Prostate gland (tissue), 2 donors: ENCODE measurements at regions of chr11 and their contacts with region 1.

Region 1: GRCh38 chr11:130636722-130637517 is 188.5 kb downstream of the ADAMTS15 start:
- DNase-seq: no peak
- H3K4me3 ChIP-seq: no peak overlapping the region
- H3K27ac ChIP-seq: no peak overlapping the region
- H3K4me1 ChIP-seq: no peaks in the 10 kb centered on the region
- H3K27me3 ChIP-seq: no peaks in the 10 kb centered on the region
- CTCF ChIP-seq: no peak
- POLR2A ChIP-seq: no peak

Region 2: DNA sequence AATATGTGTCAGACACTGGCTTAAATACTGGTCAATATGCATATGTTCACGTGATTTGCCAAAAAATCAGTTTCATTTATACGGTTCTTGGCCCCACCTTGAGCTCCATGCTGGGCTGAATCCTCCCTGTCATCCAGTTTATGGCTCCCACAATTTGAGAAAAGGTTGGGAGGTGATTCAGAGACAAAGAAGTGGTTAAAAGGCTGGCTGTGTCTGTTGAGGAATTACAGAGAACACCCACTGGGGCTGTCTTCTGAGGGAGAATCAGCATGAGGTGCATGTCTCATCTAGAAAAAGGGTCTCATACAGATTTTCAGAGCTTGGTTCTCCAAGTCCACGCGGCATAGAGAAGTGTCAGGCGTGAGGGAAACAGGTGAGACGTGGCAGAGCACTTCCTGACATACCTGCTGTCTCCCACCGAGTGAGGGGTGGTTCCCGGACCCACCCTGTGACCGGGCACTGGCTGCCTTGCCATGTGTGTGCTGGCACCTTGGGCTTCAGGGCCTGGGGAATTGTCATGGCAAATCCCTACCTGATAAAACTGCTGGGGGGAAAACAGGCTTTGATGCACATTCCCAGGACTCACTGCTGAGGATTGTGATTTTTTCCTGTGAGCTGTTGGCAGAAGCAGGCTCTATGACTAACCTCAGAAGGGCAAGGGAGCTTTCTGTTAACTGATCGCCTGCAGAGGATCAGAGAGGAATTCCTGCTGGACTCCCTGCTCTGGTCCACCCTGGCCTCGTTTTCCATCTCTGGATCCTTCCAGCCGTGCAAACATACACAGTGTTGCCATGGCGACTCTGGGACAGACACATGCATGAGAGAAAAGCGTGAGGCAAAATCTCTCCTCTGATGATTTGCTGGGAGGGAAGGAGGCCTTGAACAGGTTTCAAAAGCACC is 35.1 kb after region 1 on chr11:
- intact Hi-C with region 1: loop called (anchors 5 kb)
- DNase-seq: no peak
- H3K4me3 ChIP-seq: no peak overlapping the region
- H3K27ac ChIP-seq: no peak overlapping the region
- H3K4me1 ChIP-seq: no peaks in the 10 kb centered on the region
- H3K27me3 ChIP-seq: no peaks in the 10 kb centered on the region
- CTCF ChIP-seq: no peak
- POLR2A ChIP-seq: no peak